Breast epithelium (tissue), 4 donors: ENCODE measurements at regions of chr3 and their contacts with region 1.

Region 1: GRCh38 chr3:131526801-131527347 is 24.1 kb upstream of the MRPL3 start:
- DNase-seq: no peak
- H3K4me3 ChIP-seq: peak overlapping the region; percentile 32 to 59 (median 34)
- H3K27ac ChIP-seq: no peak overlapping the region
- H3K4me1 ChIP-seq: no peaks in the 10 kb centered on the region
- H3K27me3 ChIP-seq: peaks cover 0 to 6% of the 10 kb centered on the region in 2 donors
- CTCF ChIP-seq: no peak
- POLR2A ChIP-seq: no peak

Region 2: GRCh38 chr3:131480116-131480515 is 46.8 kb before region 1 on chr3:
- intact Hi-C with region 1: loop called (anchors 2 kb)
- DNase-seq: no peak
- H3K4me3 ChIP-seq: no peak overlapping the region
- H3K27ac ChIP-seq: no peak overlapping the region
- H3K4me1 ChIP-seq: no peaks in the 10 kb centered on the region
- H3K27me3 ChIP-seq: no peaks in the 10 kb centered on the region
- CTCF ChIP-seq: no peak
- POLR2A ChIP-seq: no peak